Left cardiac atrium (tissue), 4 donors: ENCODE measurements at regions of chr4 and their contacts with region 1.

Region 1: DNA sequence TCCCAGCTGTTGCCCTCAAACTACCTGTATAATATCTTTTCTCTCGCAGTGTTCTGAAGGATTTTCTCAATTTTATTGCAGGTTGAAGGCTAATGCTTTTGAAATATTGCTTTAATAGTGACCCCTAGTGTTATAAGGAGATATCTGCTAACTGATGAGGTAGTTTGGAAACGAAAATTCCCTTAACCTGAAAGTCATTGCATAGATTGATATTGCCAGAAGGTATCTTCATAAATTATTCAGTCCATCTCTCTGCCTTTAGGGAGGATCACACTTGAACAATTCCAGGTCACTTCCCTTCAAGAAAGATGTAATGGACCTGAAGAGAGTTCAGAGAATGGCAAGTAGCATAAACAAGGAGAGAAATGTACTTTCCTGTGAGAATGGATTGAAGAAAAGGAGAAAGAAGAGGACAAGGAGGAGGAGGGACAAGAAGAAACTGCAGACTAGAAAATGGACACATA is 44.1 kb downstream of the TIGD4 start:
- DNase-seq: no peak
- ATAC-seq: peak; percentile 42 to 44

Region 2: GRCh38 chr4:152500800-152501434 is 234.5 kb before region 1 on chr4:
- intact Hi-C with region 1: loop called (anchors 2 to 10 kb)
- DNase-seq: no peak
- ATAC-seq: peak; percentile 72

Region 3: GRCh38 chr4:152870606-152871005 is 135.2 kb after region 1 on chr4:
- intact Hi-C with region 1: no loop called
- DNase-seq: no peak
- ATAC-seq: no peak